ENCODE measurements at regions of chr13 and their contacts with region 1.

Region 1: DNA sequence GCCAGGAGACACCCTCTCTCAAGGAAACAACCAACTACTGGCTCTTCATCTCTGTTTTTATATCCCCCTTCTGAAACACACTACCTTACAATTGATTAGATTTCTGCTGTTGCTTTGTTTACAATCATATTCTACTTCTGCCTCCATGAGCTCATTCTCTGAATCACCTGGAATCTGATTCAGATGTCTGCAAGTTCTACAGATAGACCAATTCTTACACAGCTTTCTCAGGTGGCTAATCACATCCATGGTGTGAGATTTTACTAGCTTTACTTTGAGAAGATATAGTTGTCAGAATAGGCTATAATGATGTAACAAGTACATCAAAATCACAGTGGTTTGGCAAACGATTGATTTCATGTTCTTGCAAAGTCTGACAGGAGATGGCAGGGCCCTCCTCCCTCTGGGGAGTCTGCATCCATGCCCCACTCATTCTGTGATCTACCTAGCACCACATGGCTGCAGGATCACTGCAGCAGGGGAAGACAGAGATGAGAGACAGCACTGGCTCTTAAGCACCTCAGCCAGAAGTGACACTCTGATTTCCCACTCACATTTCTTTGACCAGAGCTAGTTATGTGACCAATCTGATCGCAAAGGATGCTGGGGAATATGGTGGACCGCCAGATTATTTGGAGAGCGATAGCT is 243.7 kb downstream of the FOXO1 start:
- DNase-seq: peak in 2 of 9 donors; percentile 16 to 26
- ATAC-seq: no peak
- H3K4me3 ChIP-seq: no peak overlapping the region
- H3K4me3 Mint-ChIP-seq: peak overlapping the region in 2 of 10 donors; percentile 5 to 6
- H3K27ac ChIP-seq: no peak overlapping the region
- H3K27ac Mint-ChIP-seq: peak overlapping the region in 5 of 9 donors; percentile 1 to 28 (median 10)
- H3K4me1 ChIP-seq: peaks cover 0 to 10% of the 10 kb centered on the region in 2 donors
- H3K4me1 Mint-ChIP-seq: peaks cover 9 to 22% (median 17%) of the 10 kb centered on the region in 7 donors
- H3K27me3 ChIP-seq: no peaks in the 10 kb centered on the region
- H3K27me3 Mint-ChIP-seq: no peaks in the 10 kb centered on the region

Region 2: GRCh38 chr13:40433577-40433976 is 10.9 kb after region 1 on chr13:
- CTCF ChIA-PET with region 1: no interaction called
- POLR2A ChIA-PET with region 1: interaction called, 3 read pairs
- intact Hi-C with region 1: loop called in 1 of 2 experiments (anchors 2 kb)
- DNase-seq: peak in 6 of 9 donors; percentile 8 to 35 (median 25)
- ATAC-seq: peak; percentile 74
- H3K4me3 ChIP-seq: no peak overlapping the region
- H3K4me3 Mint-ChIP-seq: peak overlapping the region in 8 of 10 donors; percentile 4 to 68 (median 62)
- H3K27ac ChIP-seq: no peak overlapping the region
- H3K27ac Mint-ChIP-seq: peak overlapping the region in 8 of 9 donors; percentile 41 to 94 (median 82)
- H3K4me1 ChIP-seq: peaks cover 24 to 56% of the 10 kb centered on the region in 2 donors
- H3K4me1 Mint-ChIP-seq: peaks cover 29 to 78% (median 69%) of the 10 kb centered on the region in 7 donors
- H3K27me3 ChIP-seq: no peaks in the 10 kb centered on the region
- H3K27me3 Mint-ChIP-seq: no peaks in the 10 kb centered on the region

Region 3: GRCh38 chr13:40440990-40441820 is 18.5 kb after region 1 on chr13:
- CTCF ChIA-PET with region 1: no interaction called
- POLR2A ChIA-PET with region 1: no interaction called
- intact Hi-C with region 1: loop called in 1 of 2 experiments (anchors 2 kb)
- DNase-seq: no peak
- ATAC-seq: no peak
- H3K4me3 ChIP-seq: no peak overlapping the region
- H3K4me3 Mint-ChIP-seq: no peak overlapping the region
- H3K27ac ChIP-seq: no peak overlapping the region
- H3K27ac Mint-ChIP-seq: no peak overlapping the region
- H3K4me1 ChIP-seq: peaks cover 4 to 24% of the 10 kb centered on the region in 2 donors
- H3K4me1 Mint-ChIP-seq: peaks cover 16 to 33% (median 28%) of the 10 kb centered on the region in 7 donors
- H3K27me3 ChIP-seq: no peaks in the 10 kb centered on the region
- H3K27me3 Mint-ChIP-seq: no peaks in the 10 kb centered on the region